Activated T-helper 1 cell treated with anti-CD3 and anti-CD28 coated beads, Interleukin-12 subunit alpha, Interleukin-12 subunit beta, Interleukin-2, Interleukin-4 antibody, amounts not matched to agents 30 ng/mL and 10 ng/mL and 1 ng/mL, durations not matched to agents 14 hours and 24 hours and 36 hours (primary cell): ENCODE measurements at regions of chr9 and their contacts with region 1.

Region 1: GRCh38 chr9:33076358-33077004 is at the start of gene SMU1:
- DNase-seq: peak; percentile 96
- H3K4me3 Mint-ChIP-seq: peak within 1 kb of the TSS; percentile 99
- H3K27ac Mint-ChIP-seq: peak within 1 kb of the TSS; percentile 96
- H3K4me1 Mint-ChIP-seq: peaks cover 37% of the 10 kb centered on the region
- H3K27me3 Mint-ChIP-seq: peaks cover 2% of the 10 kb centered on the region
- total RNA-seq, gene SMU1: 28.8 TPM in 2 replicates

Region 2: GRCh38 chr9:33024966-33025571 is 51.4 kb before region 1 on chr9 and contains the start of gene DNAJA1:
- intact Hi-C with region 1: loop called (anchors 1 kb)
- DNase-seq: peak; percentile 95
- H3K4me3 Mint-ChIP-seq: peak within 1 kb of the TSS; percentile 94
- H3K27ac Mint-ChIP-seq: peak within 1 kb of the TSS; percentile 98
- H3K4me1 Mint-ChIP-seq: peaks cover 68% of the 10 kb centered on the region
- H3K27me3 Mint-ChIP-seq: no peaks in the 10 kb centered on the region
- total RNA-seq, gene DNAJA1: 296 and 312 TPM in 2 replicates

Region 3: DNA sequence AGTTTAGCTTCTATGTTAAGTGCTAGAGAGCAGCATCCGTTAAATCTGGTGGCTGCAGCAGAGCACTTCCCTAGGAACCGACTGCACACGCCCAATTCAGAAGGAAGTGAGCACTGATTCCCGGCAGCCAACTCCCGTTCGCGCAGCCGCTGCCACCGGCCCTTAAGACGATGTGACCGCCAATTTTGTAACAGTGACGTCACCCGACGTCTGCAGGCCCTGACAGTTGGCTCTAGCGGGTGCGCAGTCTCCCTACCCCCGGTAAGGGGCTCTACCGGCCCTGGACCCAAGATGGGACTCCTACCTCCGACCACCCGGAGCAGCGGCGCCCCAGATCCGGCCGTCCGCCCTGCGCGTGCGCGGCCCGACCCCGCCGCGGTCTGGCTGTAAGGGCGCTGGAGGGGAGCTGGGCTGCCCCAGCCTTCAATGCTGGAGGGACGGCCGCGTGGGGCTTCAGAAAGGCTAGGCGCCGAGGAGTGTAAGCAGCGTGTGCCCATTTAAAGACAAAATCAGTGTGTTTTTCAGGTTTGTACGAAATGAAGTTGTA is 32.3 kb before region 1 on chr9:
- intact Hi-C with region 1: loop called (anchors 1 kb)
- DNase-seq: peak; percentile 61
- H3K4me3 Mint-ChIP-seq: peak overlapping the region; percentile 80
- H3K27ac Mint-ChIP-seq: peak overlapping the region; percentile 58
- H3K4me1 Mint-ChIP-seq: peaks cover 21% of the 10 kb centered on the region
- H3K27me3 Mint-ChIP-seq: no peaks in the 10 kb centered on the region

Region 4: GRCh38 chr9:33130508-33130911 is 54.0 kb after region 1 on chr9:
- intact Hi-C with region 1: loop called (anchors 1 kb)
- DNase-seq: no peak
- H3K4me3 Mint-ChIP-seq: peak overlapping the region; percentile 51
- H3K27ac Mint-ChIP-seq: peak overlapping the region; percentile 93
- H3K4me1 Mint-ChIP-seq: peaks cover 37% of the 10 kb centered on the region
- H3K27me3 Mint-ChIP-seq: no peaks in the 10 kb centered on the region

Region 5: DNA sequence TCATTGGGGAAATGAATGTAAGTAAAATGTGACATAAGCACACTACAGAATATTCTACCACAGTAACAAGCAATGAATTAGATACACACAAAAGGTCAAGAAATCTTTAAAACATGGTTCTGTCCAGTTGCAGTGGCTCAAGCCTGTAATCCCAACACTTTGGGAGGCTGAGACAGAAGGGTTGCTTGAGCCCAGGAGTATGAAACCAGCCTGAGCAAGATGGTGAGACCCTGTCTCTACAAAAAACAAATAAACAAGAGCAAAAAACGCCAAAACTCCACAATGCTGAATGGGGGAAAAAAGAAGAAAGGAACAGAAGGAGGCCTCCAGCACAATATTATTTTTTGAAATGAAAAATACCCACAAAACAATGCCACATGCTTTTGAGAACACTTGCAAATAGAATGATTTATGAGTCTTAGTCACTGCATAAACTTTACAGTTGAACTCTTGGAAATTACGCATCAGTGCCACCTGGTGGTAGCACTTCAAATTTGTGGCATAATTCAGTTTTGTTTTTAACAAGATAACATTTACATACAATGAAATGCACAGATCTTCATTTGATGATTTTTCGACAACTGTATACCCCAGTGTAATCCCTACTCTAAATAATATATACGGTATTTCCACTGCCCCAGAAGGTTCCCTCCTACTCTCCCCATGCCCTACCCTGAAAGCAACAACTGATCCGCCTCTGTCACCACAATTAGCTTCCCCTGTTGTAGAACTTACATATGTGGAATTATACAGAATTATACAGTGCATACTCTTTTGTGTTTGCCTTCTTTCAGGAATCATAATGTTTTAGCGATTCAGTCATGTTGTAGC is 149.1 kb after region 1 on chr9:
- intact Hi-C with region 1: loop called (anchors 1 kb)
- DNase-seq: peak; percentile 55
- H3K4me3 Mint-ChIP-seq: no peak overlapping the region
- H3K27ac Mint-ChIP-seq: peak overlapping the region; percentile 70
- H3K4me1 Mint-ChIP-seq: peaks cover 36% of the 10 kb centered on the region
- H3K27me3 Mint-ChIP-seq: no peaks in the 10 kb centered on the region

Region 6: GRCh38 chr9:33264473-33265177 is 188.1 kb after region 1 on chr9 and contains the starts of genes BAG1 and CHMP5:
- intact Hi-C with region 1: loop called (anchors 1 kb)
- DNase-seq: peak; percentile 99
- H3K4me3 Mint-ChIP-seq: peak within 1 kb of the TSS; percentile 96
- H3K27ac Mint-ChIP-seq: peak within 1 kb of the TSS; percentile 94
- H3K4me1 Mint-ChIP-seq: peaks cover 58% of the 10 kb centered on the region
- H3K27me3 Mint-ChIP-seq: no peaks in the 10 kb centered on the region
- total RNA-seq, gene BAG1: 75.0 and 78.2 TPM in 2 replicates
- total RNA-seq, gene CHMP5: 70.7 and 76.7 TPM in 2 replicates